ENCODE measurements at regions of chr10 and their contacts with region 1.

Region 1: GRCh38 chr10:113661332-113661731 is 2.5 kb downstream of the NRAP start:
- DNase-seq: no peak
- ATAC-seq: peak; percentile 54 to 77 (median 70)
- H3K4me3 ChIP-seq: peak overlapping the region in 9 of 10 donors; percentile 8 to 60 (median 48)
- H3K27ac ChIP-seq: peak overlapping the region in 8 of 10 donors; percentile 58 to 97 (median 84)
- H3K4me1 ChIP-seq: peaks cover 0 to 35% (median 20%) of the 10 kb centered on the region in 9 donors
- H3K27me3 ChIP-seq: no peaks in the 10 kb centered on the region
- CTCF ChIP-seq: no peak

Region 2: DNA sequence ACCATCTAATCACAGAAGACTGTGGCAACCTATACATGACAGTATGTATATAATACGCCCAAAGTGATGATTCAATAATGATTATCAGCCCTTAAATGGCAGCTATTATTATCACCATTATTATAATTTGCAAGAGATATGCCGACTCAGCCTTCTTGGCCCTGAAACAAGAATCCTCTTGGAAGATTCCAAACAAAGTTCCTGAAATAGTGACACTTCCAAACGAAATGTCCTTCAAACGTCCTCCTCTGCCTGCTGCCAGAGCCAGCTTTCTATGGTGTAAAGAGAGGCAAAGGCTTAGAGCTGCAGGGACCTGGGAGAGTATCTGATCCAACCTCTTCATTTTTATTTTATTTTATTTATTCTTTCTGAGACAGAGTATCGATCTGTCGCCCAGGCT is 33.5 kb before region 1 on chr10:
- intact Hi-C with region 1: loop called in 1 of 10 experiments (anchors 2 kb)
- DNase-seq: peak in 1 of 2 donors; percentile 48
- ATAC-seq: peak; percentile 39 to 82 (median 62)
- H3K4me3 ChIP-seq: no peak overlapping the region
- H3K27ac ChIP-seq: peak overlapping the region in 9 of 10 donors; percentile 54 to 93 (median 83)
- H3K4me1 ChIP-seq: peaks cover 0 to 94% (median 30%) of the 10 kb centered on the region in 9 donors
- H3K27me3 ChIP-seq: peaks cover 0 to 5% (median 0%) of the 10 kb centered on the region in 7 donors
- CTCF ChIP-seq: no peak

Region 3: DNA sequence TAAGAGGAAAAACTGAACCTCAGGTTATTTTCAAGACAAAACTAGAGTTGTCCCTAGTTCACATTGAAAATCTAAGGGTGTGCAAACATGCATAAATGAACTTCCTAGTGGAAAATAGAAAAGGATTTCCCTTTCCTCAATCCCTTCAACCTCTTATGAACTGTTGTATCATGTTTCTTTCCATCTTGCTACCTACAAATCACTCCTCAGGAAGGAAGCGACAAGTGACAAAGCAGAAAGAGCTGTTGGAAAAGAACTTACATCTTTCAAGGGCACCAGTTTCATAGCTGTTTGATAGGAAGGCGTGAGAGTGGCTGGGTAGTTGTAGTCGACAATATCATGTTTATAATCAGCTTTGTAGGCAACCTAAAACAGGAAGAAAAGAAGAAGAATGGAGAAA is 21.4 kb before region 1 on chr10:
- intact Hi-C with region 1: no loop called
- DNase-seq: no peak
- ATAC-seq: no peak
- H3K4me3 ChIP-seq: no peak overlapping the region
- H3K27ac ChIP-seq: peak overlapping the region in 4 of 10 donors; percentile 7 to 87 (median 31)
- H3K4me1 ChIP-seq: peaks cover 0 to 65% (median 22%) of the 10 kb centered on the region in 9 donors
- H3K27me3 ChIP-seq: peaks cover 0 to 7% (median 0%) of the 10 kb centered on the region in 7 donors
- CTCF ChIP-seq: no peak

Measured in heart right ventricle (tissue), 16 donors.